Adrenal gland (tissue), 19 donors: ENCODE measurements at regions of chr17 and their contacts with region 1.

Region 1: GRCh38 chr17:42843358-42843934 is 934 bp upstream of the AOC2 start:
- DNase-seq: peak; percentile 35 to 68 (median 53)
- H3K4me3 ChIP-seq: no peak overlapping the region
- H3K27ac ChIP-seq: peak overlapping the region in 2 of 5 donors; percentile 19 to 35
- H3K4me1 ChIP-seq: peaks cover 0 to 21% of the 10 kb centered on the region in 2 donors
- H3K27me3 ChIP-seq: no peaks in the 10 kb centered on the region
- CTCF ChIP-seq: peak; percentile 70 to 99 (median 96)
- POLR2A ChIP-seq: no peak

Region 2: DNA sequence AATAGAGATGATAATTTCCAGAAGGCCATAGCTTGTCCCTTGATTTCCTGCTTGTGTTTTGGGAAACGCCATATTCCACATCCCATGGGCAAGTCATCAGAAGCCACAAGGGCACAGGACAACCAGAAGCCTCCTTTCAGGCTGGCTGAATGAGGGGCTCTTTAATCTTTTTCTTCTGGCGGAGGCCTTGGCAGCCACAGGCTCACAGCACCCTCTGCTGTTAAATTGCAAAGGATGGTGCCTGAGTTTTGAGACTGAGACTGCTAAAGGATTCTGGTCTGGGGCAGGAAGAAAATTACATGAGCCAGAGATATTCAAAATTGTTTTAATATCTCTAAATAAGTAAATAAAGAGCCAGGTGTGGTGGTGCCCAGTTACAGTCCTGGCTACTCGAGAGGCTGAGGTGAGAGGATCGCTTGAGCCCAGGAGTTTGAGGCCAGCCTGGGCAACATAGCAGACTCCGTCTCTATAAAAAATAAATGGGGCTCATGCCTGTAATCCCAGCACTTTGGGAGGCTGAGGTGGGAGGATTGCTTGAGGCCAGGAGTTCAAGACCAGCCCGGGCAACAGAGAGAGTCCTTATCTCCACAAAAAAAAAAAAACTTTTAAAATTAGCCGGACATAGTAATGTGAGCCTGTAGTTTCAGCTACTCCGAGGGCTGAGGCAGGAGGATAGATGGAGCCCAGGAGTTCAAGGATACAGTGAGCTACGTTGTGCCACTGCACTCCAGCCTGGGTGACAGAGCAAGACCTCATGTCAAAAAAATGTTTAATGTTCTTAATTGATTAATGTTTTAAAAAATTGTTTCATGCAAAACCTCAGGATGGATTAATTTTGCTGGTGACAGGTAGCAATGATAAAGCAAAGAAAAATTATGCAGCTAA is 94.5 kb after region 1 on chr17:
- intact Hi-C with region 1: loop called (anchors 5 kb)
- DNase-seq: peak; percentile 32 to 64 (median 52)
- H3K4me3 ChIP-seq: no peak overlapping the region
- H3K27ac ChIP-seq: no peak overlapping the region
- H3K4me1 ChIP-seq: no peaks in the 10 kb centered on the region
- H3K27me3 ChIP-seq: no peaks in the 10 kb centered on the region
- CTCF ChIP-seq: peak; percentile 43 to 68 (median 64)
- POLR2A ChIP-seq: no peak

Region 3: GRCh38 chr17:42997984-42998938 is 154.8 kb after region 1 on chr17 and contains the start of gene RPL27:
- intact Hi-C with region 1: loop called in 1 of 2 experiments (anchors 10 kb)
- DNase-seq: peak; percentile 96 to 100 (median 99)
- H3K4me3 ChIP-seq: peak within 1 kb of the TSS; percentile 34 to 87 (median 70)
- H3K27ac ChIP-seq: peak within 1 kb of the TSS; percentile 51 to 97 (median 93)
- H3K4me1 ChIP-seq: peaks cover 12 to 26% of the 10 kb centered on the region in 2 donors
- H3K27me3 ChIP-seq: no peaks in the 10 kb centered on the region
- CTCF ChIP-seq: peak; percentile 90 to 97 (median 95)
- POLR2A ChIP-seq: peak; percentile 44 to 89
- total RNA-seq, gene RPL27: 356 to 1,636 (median 929) TPM